ENCODE measurements at regions of chr2 and their contacts with region 1.

Region 1: DNA sequence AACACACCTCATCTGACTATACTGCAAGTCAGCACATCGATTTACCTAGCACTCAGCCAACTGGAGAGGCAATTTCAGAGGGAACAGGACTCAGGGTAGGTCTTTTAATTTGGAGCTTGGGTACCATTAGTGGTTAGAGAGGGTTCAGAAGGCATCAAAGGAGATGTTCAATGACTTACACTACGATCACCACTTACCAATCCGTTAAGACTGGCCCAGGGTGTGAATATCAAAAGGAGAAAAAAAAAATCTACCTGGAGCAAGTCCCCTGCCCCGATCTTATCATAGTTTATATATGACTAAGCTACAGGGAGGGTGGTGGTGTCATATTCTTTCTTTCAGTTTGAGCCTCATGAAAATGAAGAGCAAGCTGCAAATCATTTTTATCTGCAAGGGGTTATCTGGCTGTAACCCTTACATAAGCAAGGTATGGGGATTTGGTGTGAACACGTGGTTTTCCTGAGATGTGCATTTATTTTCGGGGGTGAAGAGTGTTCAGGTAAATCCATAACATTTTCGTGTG is 36.4 kb upstream of the GPD2 start:
- DNase-seq: no peak
- H3K4me3 ChIP-seq: peak overlapping the region; percentile 24 to 52 (median 48)
- H3K27ac ChIP-seq: peak overlapping the region; percentile 57 to 96 (median 84)
- H3K4me1 ChIP-seq: peaks cover 6 to 8% of the 10 kb centered on the region in 2 donors
- H3K27me3 ChIP-seq: no peaks in the 10 kb centered on the region
- CTCF ChIP-seq: no peak
- POLR2A ChIP-seq: no peak

Region 2: DNA sequence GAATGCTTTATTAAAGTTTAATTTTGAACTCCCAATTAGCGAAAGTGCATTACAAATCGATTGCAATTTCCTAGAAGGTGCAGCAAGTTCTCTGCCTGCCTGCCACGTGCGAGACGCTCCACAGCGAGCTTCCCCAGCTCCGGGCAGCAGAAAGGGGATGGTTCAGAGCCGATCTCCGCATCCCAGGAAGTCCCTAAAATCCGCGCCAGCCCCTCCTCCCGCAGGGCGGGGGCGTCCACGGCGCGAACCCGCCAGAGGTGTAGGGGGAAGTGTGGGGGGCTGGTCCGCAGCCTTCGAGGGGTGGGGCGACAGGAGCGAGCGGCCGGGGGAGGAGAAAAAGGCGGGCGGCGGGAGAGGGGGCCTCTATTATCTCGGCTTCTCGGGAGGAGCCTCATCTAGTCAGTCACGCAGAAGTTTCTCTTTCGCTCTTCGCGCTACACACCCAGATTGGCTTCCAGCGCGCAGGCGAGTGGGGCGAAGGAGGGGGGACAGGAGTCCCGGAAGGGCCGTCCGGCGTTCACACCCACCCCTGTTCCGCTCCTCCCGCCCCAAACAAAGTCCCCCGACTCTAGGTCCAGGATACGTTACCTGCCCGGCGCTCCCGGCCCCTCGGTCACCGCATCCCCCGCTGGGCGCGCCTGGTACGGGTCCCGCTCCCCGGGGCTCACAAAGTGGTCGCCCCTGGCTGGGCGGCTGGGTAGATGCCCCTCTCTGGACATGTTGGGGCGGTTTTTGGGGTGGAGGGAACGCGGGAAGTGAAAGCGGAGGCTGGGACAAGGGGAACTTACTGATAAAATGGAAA is 58.1 kb before region 1 on chr2:
- intact Hi-C with region 1: loop called (anchors 5 to 10 kb)
- DNase-seq: peak; percentile 90 to 96 (median 94)
- H3K4me3 ChIP-seq: peak overlapping the region; percentile 92 to 100 (median 100)
- H3K27ac ChIP-seq: peak overlapping the region; percentile 100
- H3K4me1 ChIP-seq: peaks cover 0 to 34% of the 10 kb centered on the region in 2 donors
- H3K27me3 ChIP-seq: no peaks in the 10 kb centered on the region
- CTCF ChIP-seq: no peak
- POLR2A ChIP-seq: peak; percentile 79 to 90

Region 3: GRCh38 chr2:156349605-156350004 is 50.2 kb before region 1 on chr2:
- intact Hi-C with region 1: loop called (anchors 5 to 10 kb)
- DNase-seq: no peak
- H3K4me3 ChIP-seq: no peak overlapping the region
- H3K27ac ChIP-seq: no peak overlapping the region
- H3K4me1 ChIP-seq: no peaks in the 10 kb centered on the region
- H3K27me3 ChIP-seq: no peaks in the 10 kb centered on the region
- CTCF ChIP-seq: no peak
- POLR2A ChIP-seq: no peak

Measured in adrenal gland (tissue), 19 donors.